Cardiac septum (tissue), 1 donor: ENCODE measurements at regions of chr14 and their contacts with region 1.

Region 1: DNA sequence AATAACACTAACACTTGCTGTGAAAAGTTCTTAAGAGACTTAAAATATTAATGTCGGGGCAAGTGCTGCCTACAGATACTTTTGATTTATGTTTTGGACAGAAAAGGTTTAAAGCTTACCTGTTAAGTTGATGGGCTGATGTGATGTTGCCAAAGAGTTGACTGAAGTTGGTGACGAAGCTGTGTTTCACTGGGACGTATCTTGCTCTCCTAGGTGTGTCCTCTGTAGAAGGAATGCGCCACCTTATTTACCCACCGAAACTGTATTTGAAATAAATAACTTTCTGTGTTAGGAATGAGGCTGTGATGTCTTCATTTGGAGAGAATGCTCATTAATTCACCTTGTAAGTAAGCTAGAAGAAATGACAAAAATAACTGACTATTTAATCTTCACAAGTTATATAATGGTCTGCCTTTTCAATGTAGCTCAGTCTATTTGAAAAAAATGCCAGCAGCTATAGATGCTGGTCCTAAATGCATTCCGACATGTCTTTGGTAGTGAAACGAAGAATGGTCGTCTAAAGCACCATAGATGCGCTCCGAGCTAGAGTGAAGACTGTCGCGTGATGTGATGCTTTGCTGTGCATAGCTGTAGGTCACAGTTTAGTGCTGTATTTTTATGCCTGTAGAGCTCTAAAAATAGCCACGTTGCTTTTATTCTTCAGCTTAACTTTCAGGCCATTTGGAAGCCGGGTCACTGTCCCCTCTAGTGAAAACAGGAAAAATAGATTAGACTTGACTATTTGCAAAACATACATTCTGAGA is at the start of gene RD3L:
- DNase-seq: no peak
- total RNA-seq, gene RD3L: 13.1 TPM

Region 2: DNA sequence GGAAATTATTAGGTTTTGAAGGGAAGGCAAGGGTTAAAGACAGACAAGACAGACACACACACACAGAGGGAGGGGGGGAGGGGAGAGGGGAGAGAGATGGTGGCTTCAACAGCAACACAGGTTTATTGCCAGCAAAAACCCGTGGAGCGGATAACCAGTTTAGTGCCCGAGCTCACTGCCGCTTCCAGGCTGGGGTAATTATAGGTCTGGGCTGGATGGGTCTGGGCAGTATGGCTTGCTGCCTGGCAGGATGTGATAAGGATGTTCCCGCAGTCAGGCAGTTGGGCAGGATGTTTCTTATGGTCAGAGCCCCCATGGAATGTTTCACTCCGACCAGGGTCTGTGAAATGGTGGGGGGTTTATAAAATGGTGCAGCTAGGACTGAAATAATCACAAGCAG is 18.3 kb before region 1 on chr14:
- intact Hi-C with region 1: loop called (anchors 1 kb)
- DNase-seq: peak; percentile 82